CD4-positive, alpha-beta memory T cell (primary cell): ENCODE measurements at regions of chr3 and their contacts with region 1.

Region 1: DNA sequence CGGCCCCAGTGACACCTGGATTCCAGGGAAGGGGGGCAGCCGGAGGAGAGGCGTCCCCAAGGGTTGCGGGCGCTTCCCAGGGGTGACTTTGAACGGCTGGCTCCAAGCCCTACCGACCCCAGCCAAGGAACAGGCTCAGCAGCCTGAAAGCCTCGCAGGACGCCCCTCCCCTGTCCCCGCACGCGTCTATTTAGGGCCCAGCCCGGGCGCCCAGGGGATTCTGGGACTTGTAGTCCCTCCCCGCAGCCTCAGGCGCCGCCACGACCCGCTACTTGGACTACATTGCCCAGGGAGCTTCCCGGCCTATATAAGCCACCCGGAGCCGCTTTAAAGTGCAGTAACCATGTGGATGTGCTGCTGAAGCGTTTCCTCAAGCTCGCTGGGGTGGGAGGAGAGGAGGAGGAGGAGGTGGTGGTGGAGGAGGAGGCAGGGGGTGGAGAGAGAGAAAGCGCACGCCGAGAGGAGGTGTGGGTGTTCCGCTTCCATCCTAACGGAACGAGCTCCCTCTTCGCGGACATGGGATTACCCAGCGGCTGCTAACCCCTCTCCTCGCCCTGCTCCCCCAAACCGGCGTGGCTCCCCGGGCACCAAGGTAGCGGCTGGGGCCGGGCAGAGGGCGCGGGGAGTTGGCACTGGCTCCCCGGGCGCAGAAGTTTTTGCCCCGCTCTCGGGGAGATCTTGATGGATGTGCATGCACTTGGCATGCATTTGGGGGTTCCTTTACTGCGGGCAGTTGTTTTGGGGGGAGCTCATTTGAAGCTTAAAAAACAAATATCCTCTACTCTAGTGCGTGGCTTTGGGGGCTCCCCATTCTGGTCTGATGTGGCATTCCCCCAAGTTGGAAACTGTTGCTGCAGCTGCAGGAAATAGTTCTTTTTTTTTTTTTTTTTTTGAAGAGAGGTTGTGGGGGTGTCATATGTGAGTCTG is at the start of gene ITPR1:
- DNase-seq: peak; percentile 97 to 99 (median 98)
- H3K4me3 ChIP-seq: peak within 1 kb of the TSS; percentile 76 to 87
- H3K4me3 Mint-ChIP-seq: peak within 1 kb of the TSS; percentile 91 to 98 (median 96)
- H3K27ac ChIP-seq: peak within 1 kb of the TSS; percentile 71
- H3K27ac Mint-ChIP-seq: peak within 1 kb of the TSS; percentile 90 to 95 (median 94)
- H3K4me1 ChIP-seq: peaks cover 41% of the 10 kb centered on the region
- H3K4me1 Mint-ChIP-seq: peaks cover 27 to 51% (median 42%) of the 10 kb centered on the region in 4 donors
- H3K27me3 ChIP-seq: no peaks in the 10 kb centered on the region
- H3K27me3 Mint-ChIP-seq: peaks cover 2 to 3% of the 10 kb centered on the region in 2 donors
- total RNA-seq, gene ITPR1: 72.4 to 72.8 TPM

Region 2: GRCh38 chr3:3179407-3180094 is 1313.7 kb before region 1 on chr3 and contains the start of gene CRBN:
- CTCF ChIA-PET with region 1: no interaction called
- POLR2A ChIA-PET with region 1: no interaction called
- intact Hi-C with region 1: loop called (anchors 1 kb)
- DNase-seq: peak; percentile 87 to 91 (median 89)
- H3K4me3 ChIP-seq: peak within 1 kb of the TSS; percentile 74 to 97
- H3K4me3 Mint-ChIP-seq: peak within 1 kb of the TSS; percentile 89 to 98 (median 93)
- H3K27ac ChIP-seq: peak within 1 kb of the TSS; percentile 93
- H3K27ac Mint-ChIP-seq: peak within 1 kb of the TSS; percentile 86 to 97 (median 95)
- H3K4me1 ChIP-seq: peaks cover 50% of the 10 kb centered on the region
- H3K4me1 Mint-ChIP-seq: peaks cover 35 to 45% (median 40%) of the 10 kb centered on the region in 4 donors
- H3K27me3 ChIP-seq: no peaks in the 10 kb centered on the region
- H3K27me3 Mint-ChIP-seq: no peaks in the 10 kb centered on the region
- total RNA-seq, gene CRBN: 150 to 162 TPM

Region 3: GRCh38 chr3:4387210-4388204 is 105.8 kb before region 1 on chr3:
- CTCF ChIA-PET with region 1: no interaction called
- POLR2A ChIA-PET with region 1: no interaction called
- intact Hi-C with region 1: no loop called
- DNase-seq: no peak
- H3K4me3 ChIP-seq: no peak overlapping the region
- H3K4me3 Mint-ChIP-seq: no peak overlapping the region
- H3K27ac ChIP-seq: no peak overlapping the region
- H3K27ac Mint-ChIP-seq: peak overlapping the region in 4 of 7 donors; percentile 7 to 65 (median 32)
- H3K4me1 ChIP-seq: no peaks in the 10 kb centered on the region
- H3K4me1 Mint-ChIP-seq: peaks cover 0 to 8% (median 0%) of the 10 kb centered on the region in 4 donors
- H3K27me3 ChIP-seq: no peaks in the 10 kb centered on the region
- H3K27me3 Mint-ChIP-seq: no peaks in the 10 kb centered on the region

Region 4: DNA sequence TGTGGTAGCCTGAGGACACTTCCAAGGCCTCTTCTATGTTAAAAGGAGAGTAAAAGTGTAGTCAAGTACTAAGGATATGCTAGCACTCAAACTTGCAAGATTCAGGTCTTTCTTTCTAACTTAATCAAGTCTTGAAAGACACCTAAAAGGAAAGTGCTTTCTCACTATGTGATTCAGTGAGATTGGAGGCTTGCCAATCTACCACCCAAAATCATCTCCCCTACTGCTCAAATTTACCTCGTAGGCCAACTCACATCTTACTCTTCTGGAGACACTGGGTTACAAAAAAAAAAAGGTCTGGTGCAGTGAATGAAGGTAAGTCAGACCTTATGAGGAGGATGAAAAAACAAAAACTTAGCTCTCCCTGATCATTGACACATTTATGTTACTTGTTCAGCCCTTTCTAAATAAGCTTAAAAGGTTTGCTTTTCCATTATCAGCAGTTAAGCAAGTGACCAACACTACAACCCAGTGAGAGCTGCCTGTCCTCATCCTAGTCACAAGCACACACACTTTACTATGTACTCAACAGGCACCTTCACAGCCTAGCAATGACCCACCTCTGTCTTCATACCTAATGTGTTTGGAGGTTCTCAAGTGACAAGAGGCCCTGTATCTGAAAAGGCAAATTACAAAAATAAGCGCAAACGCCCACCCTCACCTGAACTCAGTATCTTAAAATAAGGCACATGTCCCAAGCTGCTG is 45.8 kb before region 1 on chr3:
- CTCF ChIA-PET with region 1: no interaction called
- POLR2A ChIA-PET with region 1: interaction called, 3 read pairs
- intact Hi-C with region 1: loop called (anchors 5 kb)
- DNase-seq: no peak
- H3K4me3 ChIP-seq: no peak overlapping the region
- H3K4me3 Mint-ChIP-seq: no peak overlapping the region
- H3K27ac ChIP-seq: no peak overlapping the region
- H3K27ac Mint-ChIP-seq: no peak overlapping the region
- H3K4me1 ChIP-seq: no peaks in the 10 kb centered on the region
- H3K4me1 Mint-ChIP-seq: peaks cover 0 to 1% (median 0%) of the 10 kb centered on the region in 4 donors
- H3K27me3 ChIP-seq: no peaks in the 10 kb centered on the region
- H3K27me3 Mint-ChIP-seq: no peaks in the 10 kb centered on the region

Region 5: GRCh38 chr3:4512895-4513616 is 19.8 kb after region 1 on chr3:
- CTCF ChIA-PET with region 1: interaction called, 28 read pairs
- POLR2A ChIA-PET with region 1: interaction called, 106 read pairs
- intact Hi-C with region 1: no loop called
- DNase-seq: no peak
- H3K4me3 ChIP-seq: no peak overlapping the region
- H3K4me3 Mint-ChIP-seq: no peak overlapping the region
- H3K27ac ChIP-seq: no peak overlapping the region
- H3K27ac Mint-ChIP-seq: peak overlapping the region in 2 of 7 donors; percentile 39
- H3K4me1 ChIP-seq: peaks cover 12% of the 10 kb centered on the region
- H3K4me1 Mint-ChIP-seq: peaks cover 17 to 20% (median 19%) of the 10 kb centered on the region in 4 donors
- H3K27me3 ChIP-seq: no peaks in the 10 kb centered on the region
- H3K27me3 Mint-ChIP-seq: no peaks in the 10 kb centered on the region

Region 6: GRCh38 chr3:4834403-4834866 is 341.2 kb after region 1 on chr3:
- CTCF ChIA-PET with region 1: no interaction called
- POLR2A ChIA-PET with region 1: no interaction called
- intact Hi-C with region 1: loop called (anchors 10 kb)
- DNase-seq: peak; percentile 68 to 84 (median 75)
- H3K4me3 ChIP-seq: no peak overlapping the region
- H3K4me3 Mint-ChIP-seq: peak overlapping the region; percentile 45 to 81 (median 69)
- H3K27ac ChIP-seq: peak overlapping the region; percentile 42
- H3K27ac Mint-ChIP-seq: peak overlapping the region; percentile 83 to 97 (median 93)
- H3K4me1 ChIP-seq: peaks cover 84% of the 10 kb centered on the region
- H3K4me1 Mint-ChIP-seq: peaks cover 63 to 79% (median 74%) of the 10 kb centered on the region in 4 donors
- H3K27me3 ChIP-seq: no peaks in the 10 kb centered on the region
- H3K27me3 Mint-ChIP-seq: peaks cover 0 to 3% of the 10 kb centered on the region in 2 donors

Region 7: GRCh38 chr3:5194341-5195159 is 701.3 kb after region 1 on chr3:
- CTCF ChIA-PET with region 1: interaction called, 3 read pairs
- POLR2A ChIA-PET with region 1: interaction called, 11 read pairs
- intact Hi-C with region 1: loop called (anchors 5 kb)
- DNase-seq: peak; percentile 32 to 87 (median 47)
- H3K4me3 ChIP-seq: no peak overlapping the region
- H3K4me3 Mint-ChIP-seq: peak overlapping the region in 7 of 8 donors; percentile 37 to 81 (median 63)
- H3K27ac ChIP-seq: peak overlapping the region; percentile 54
- H3K27ac Mint-ChIP-seq: peak overlapping the region; percentile 89 to 98 (median 94)
- H3K4me1 ChIP-seq: peaks cover 88% of the 10 kb centered on the region
- H3K4me1 Mint-ChIP-seq: peaks cover 71 to 92% (median 80%) of the 10 kb centered on the region in 4 donors
- H3K27me3 ChIP-seq: no peaks in the 10 kb centered on the region
- H3K27me3 Mint-ChIP-seq: no peaks in the 10 kb centered on the region